ENCODE measurements at regions of chr12 and their contacts with region 1.

Region 1: DNA sequence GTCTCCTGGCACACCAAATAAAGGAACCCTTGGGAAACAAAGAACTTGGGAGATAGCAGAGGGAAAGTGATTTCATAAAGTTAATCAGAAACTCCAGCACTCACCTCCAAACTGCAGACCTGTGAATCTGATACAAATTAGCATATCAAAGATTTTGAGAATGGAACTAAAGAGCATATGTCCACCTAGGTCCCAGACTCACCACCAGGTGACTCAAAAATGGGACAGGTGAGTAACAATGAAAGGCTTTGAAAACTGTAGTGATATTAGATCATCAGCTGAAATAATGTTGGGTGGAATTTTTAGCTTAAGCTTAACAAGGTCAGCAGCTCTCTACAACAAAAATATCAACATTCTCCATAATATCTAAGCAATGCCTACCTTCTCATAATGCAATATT is 214.8 kb downstream of the RERGL start:
- DNase-seq: peak; percentile 3
- ATAC-seq: peak; percentile 82
- H3K4me3 ChIP-seq: no peak overlapping the region
- H3K27ac ChIP-seq: no peak overlapping the region
- H3K4me1 ChIP-seq: no peaks in the 10 kb centered on the region
- H3K27me3 ChIP-seq: no peaks in the 10 kb centered on the region
- CTCF ChIP-seq: peak in 2 of 3 experiments; percentile 45 to 49; a peak in 4 of 6 replicates
- POLR2A ChIP-seq: no peak
- RAD21 ChIP-seq: peak; percentile 15; the same call in 1 of the 2 replicates

Region 2: DNA sequence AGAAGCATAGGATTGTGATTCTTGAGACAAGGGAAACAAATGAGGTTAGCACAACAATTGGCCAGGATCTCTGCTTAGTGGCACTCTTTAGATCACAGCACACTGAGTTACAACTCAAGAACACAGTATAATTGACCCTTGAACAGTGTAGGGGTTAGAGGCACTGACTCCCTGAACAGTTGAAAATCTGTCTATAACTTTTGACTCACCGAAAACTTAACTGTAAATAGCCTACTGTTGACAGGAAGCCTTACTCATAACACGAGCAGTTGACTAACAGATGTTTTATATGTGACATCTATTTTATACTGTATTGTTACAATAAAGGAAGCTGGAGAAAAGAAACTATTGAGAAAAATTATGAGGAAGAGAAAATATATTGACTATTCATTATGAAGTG is 81.4 kb before region 1 on chr12:
- CTCF ChIA-PET with region 1: no interaction called
- POLR2A ChIA-PET with region 1: no interaction called
- RAD21 ChIA-PET with region 1: no interaction called
- intact Hi-C with region 1: no loop called
- DNase-seq: no peak
- ATAC-seq: no peak
- H3K4me3 ChIP-seq: no peak overlapping the region
- H3K27ac ChIP-seq: no peak overlapping the region
- H3K4me1 ChIP-seq: no peaks in the 10 kb centered on the region
- H3K27me3 ChIP-seq: no peaks in the 10 kb centered on the region
- CTCF ChIP-seq: no peak
- POLR2A ChIP-seq: no peak
- RAD21 ChIP-seq: no peak

Region 3: GRCh38 chr12:17841496-17841895 is 33.7 kb before region 1 on chr12:
- CTCF ChIA-PET with region 1: no interaction called
- POLR2A ChIA-PET with region 1: no interaction called
- RAD21 ChIA-PET with region 1: no interaction called
- intact Hi-C with region 1: no loop called
- DNase-seq: no peak
- ATAC-seq: no peak
- H3K4me3 ChIP-seq: no peak overlapping the region
- H3K27ac ChIP-seq: no peak overlapping the region
- H3K4me1 ChIP-seq: no peaks in the 10 kb centered on the region
- H3K27me3 ChIP-seq: no peaks in the 10 kb centered on the region
- CTCF ChIP-seq: no peak
- POLR2A ChIP-seq: no peak
- RAD21 ChIP-seq: no peak

Region 4: DNA sequence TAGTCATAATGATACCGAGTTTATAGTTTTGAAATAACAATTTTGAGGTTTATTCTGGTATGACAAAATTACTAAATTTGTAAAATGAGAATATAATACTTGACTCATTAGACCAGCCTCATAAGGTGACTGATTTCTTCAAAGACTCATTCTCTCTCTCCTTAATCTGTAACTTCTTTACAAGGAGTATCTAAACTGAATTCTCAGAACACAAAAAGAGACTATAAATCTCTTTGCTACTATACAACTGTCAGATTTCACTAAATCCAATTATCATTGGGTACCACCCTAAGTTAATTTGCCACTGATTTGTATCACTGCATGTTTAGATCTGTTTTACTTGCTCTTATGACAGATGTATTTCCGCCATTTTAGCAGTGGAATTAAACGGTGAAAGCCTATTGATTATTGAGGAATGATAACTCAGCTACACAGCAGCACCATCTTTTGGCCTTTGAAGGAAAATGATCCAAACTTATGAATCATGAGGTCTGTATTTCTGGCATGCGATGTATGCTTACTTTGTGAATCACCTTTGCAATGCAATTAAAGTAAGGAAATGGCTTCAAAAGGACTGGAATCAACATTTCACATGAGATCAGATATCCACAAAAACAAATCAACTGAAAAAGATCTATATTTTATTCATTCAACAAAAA is 53.6 kb after region 1 on chr12:
- CTCF ChIA-PET with region 1: interaction called, 3 read pairs
- POLR2A ChIA-PET with region 1: no interaction called
- RAD21 ChIA-PET with region 1: no interaction called
- intact Hi-C with region 1: loop called (anchors 2 kb)
- DNase-seq: peak; percentile 75
- ATAC-seq: peak; percentile 84
- H3K4me3 ChIP-seq: no peak overlapping the region
- H3K27ac ChIP-seq: peak overlapping the region; percentile 33; the same call in 1 of the 2 replicates
- H3K4me1 ChIP-seq: peaks cover 9 to 17% of the 10 kb centered on the region in 2 experiments
- H3K27me3 ChIP-seq: no peaks in the 10 kb centered on the region
- CTCF ChIP-seq: peak; percentile 15 to 42 (median 39); a peak in 3 of 6 replicates
- POLR2A ChIP-seq: no peak
- RAD21 ChIP-seq: peak; percentile 67

Region 5: GRCh38 chr12:17992002-17992656 is 116.9 kb after region 1 on chr12:
- CTCF ChIA-PET with region 1: no interaction called
- POLR2A ChIA-PET with region 1: no interaction called
- RAD21 ChIA-PET with region 1: no interaction called
- intact Hi-C with region 1: loop called (anchors 5 kb)
- DNase-seq: peak; percentile 28
- ATAC-seq: peak; percentile 42; the same call in 1 of the 2 replicates
- H3K4me3 ChIP-seq: no peak overlapping the region
- H3K27ac ChIP-seq: no peak overlapping the region
- H3K4me1 ChIP-seq: no peaks in the 10 kb centered on the region
- H3K27me3 ChIP-seq: no peaks in the 10 kb centered on the region
- CTCF ChIP-seq: peak; percentile 31 to 77 (median 59); a peak in 5 of 6 replicates
- POLR2A ChIP-seq: no peak
- RAD21 ChIP-seq: peak; percentile 56

Measured in HCT116 (cell line).